ENCODE measurements at regions of chr3 and their contacts with region 1.

Region 1: GRCh38 chr3:177359593-177360357 is 162.5 kb upstream of the TBL1XR1 start:
- DNase-seq: peak; percentile 93 to 98
- ATAC-seq: peak; percentile 75

Region 2: DNA sequence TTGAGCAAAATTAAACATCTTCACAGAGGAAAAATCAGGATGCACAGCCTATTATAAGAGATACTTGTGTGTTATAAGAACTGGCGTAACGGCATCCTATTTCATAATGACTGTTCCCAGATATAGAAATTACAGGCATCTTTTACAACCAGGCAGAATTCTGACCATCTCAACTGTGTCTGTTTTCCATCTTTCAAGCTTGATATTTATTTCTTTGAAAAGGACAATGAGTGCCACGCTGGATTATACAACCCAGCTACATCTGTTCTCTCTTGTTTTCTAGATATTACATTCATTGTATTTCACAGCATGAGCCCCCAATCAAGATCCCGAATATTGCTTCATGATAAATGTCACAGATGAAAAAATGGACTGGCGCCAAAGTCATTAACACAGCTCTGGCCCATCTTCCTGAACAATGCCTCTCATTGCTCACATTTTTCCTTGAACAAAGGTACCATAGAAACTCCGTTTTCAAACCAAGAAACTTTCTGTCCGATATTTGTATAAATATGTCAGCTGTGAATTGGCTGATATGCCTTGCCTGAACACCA is 583.1 kb before region 1 on chr3:
- intact Hi-C with region 1: no loop called
- DNase-seq: no peak
- ATAC-seq: no peak

Region 3: GRCh38 chr3:177111541-177111949 is 248.2 kb before region 1 on chr3:
- intact Hi-C with region 1: no loop called
- DNase-seq: no peak
- ATAC-seq: peak; percentile 77

Region 4: DNA sequence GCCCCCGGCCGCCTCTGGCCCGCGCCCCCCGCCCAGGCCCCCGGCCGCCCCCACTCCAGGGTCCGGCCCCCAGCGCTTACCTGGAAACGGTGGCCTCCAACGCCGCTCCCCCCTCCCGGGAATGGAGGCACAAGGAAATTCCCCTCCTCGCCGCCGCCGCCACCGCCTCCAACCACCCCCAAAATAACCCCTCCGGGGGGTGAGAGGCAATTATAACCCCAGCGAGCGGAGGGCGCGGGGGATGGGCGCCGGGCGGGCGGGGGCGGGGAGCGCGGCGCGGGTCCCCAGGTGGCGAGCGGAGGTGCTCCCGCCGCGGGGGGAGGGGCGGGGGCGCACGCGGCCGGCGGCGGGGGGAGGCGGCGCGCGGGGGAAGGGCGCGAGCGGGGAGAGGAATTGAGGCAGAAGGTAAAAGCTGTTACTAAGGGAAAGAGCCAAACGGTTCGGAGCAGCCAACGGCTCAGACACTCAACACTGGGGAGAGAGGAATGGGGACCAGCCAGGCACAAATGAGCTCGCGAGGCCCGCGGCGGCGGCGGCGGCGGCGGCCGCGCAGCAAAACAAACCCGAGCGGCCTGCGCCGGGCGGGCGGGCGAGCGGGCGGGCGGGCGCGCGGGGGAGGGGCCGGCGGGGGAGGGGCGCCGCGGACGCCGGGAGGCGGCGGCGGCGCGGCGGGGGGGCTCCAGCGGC is 162.6 kb before region 1 on chr3 and contains the start of gene TBL1XR1:
- intact Hi-C with region 1: loop called in 1 of 2 experiments (anchors 5 kb)
- DNase-seq: peak; percentile 91 to 95
- ATAC-seq: peak; percentile 76
- total RNA-seq, gene TBL1XR1: 165 to 186 TPM

Region 5: DNA sequence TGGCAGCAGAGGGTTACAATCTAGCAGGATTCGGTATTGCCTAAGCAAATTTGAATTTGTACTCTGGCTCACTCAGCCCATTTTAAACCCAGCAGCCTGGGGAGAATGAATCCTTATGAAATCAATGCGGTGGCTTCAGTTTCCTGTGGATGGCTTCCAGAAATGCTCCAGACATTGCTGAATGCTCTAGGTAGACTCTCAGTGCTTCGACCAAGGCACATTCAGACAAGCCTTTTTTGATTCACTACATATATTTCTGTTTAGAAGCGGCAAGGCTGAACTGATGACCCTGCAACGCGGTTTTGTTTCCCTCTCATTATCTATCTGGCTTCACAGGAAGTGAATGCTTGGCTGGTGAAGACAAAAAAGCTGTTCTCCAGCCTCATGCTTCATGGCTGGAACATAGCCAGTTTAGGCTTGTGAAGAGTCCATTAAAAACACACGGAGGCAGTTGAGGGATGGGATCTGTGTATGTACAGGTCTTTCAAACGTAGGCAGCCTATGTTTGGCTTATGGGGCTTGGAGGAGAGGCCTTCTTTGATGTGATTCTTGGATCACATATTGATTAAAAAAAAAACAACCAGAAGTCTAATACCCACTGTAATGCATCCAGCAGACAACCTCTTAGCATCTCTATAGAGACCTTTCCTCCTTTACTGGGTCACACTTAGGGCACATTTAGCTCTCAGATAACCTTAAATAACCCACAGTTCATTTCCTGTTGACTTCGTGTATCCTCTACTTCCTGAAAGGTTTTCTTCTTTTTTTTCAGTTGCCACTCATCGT is 237.7 kb after region 1 on chr3:
- intact Hi-C with region 1: no loop called
- DNase-seq: peak in 1 of 2 donors; percentile 21
- ATAC-seq: peak; percentile 68

Region 6: GRCh38 chr3:178320456-178321351 is 960.9 kb after region 1 on chr3:
- intact Hi-C with region 1: loop called in 1 of 2 experiments (anchors 5 kb)
- DNase-seq: peak in 1 of 2 donors; percentile 8
- ATAC-seq: peak; percentile 95

Measured in left colon (tissue), 2 donors.